Endothelial cell of umbilical vein (primary cell): ENCODE measurements at regions of chr6 and their contacts with region 1.

Region 1: DNA sequence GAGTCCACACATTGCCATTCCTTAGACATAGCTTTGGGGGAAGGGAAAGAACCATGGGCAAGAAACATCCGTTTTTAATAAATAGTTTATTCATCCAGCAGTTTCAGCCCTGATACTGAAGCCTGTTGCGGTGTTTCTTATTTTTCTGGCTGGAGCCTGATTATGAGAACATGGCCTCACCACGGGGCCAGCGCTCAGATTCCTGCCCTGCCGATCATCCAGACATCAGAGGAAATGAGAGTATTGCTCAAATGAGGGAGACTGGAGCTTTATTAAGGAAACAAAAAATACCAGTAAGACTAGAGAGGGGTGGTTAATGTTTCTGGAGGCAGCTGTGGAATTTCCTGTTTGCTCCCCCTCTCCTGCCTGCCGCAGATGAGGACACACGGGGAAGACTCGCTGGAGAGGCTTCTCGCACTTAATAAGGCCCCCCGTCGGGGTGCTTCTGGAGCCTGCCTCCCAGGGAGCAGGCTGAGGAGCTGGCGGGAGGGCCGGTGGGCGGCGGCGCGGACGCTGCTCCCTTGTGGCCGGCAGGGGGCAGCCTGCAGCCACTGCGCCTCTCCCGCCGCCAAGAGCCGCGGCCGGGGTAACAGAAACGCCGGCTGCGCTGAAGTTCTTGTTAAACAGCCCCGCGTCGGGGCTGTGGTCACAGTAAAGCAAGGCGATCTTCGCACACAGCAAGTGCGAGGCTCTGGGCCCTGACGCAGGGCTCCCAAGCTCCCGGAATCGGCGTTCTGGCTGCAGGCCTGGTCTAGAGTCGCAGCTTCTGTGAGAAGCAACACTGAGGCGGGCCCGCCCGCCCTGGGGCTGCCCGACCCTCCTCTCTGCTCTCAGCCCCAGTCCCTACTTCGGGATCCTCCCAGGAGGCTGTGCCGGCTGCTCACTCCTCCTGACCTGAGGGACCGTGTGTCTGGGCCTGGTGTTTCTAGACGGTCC is 17.5 kb downstream of the LEMD2 start:
- DNase-seq: peak; percentile 89
- H3K4me3 ChIP-seq: no peak overlapping the region
- H3K27ac ChIP-seq: peak overlapping the region; percentile 64
- H3K4me1 ChIP-seq: peaks cover 45% of the 10 kb centered on the region
- H3K27me3 ChIP-seq: no peaks in the 10 kb centered on the region
- CTCF ChIP-seq: peak; percentile 89 to 94
- POLR2A ChIP-seq: peak; percentile 26

Region 2: GRCh38 chr6:33425668-33426577 is 345.5 kb before region 1 on chr6:
- CTCF ChIA-PET with region 1: no interaction called
- POLR2A ChIA-PET with region 1: no interaction called
- dilution Hi-C with region 1: no loop called
- intact Hi-C with region 1: no loop called
- DNase-seq: peak; percentile 85
- H3K4me3 ChIP-seq: peak overlapping the region; percentile 54 to 70 (median 69)
- H3K27ac ChIP-seq: peak overlapping the region; percentile 56
- H3K4me1 ChIP-seq: peaks cover 26% of the 10 kb centered on the region
- H3K27me3 ChIP-seq: peaks cover 16% of the 10 kb centered on the region in 2 experiments
- CTCF ChIP-seq: peak; percentile 29 to 75
- POLR2A ChIP-seq: peak; percentile 94

Region 3: GRCh38 chr6:33585403-33586107 is 185.9 kb before region 1 on chr6:
- CTCF ChIA-PET with region 1: interaction called, 5 read pairs
- POLR2A ChIA-PET with region 1: no interaction called
- dilution Hi-C with region 1: no loop called
- intact Hi-C with region 1: loop called (anchors 2 kb)
- DNase-seq: peak; percentile 75
- H3K4me3 ChIP-seq: no peak overlapping the region
- H3K27ac ChIP-seq: no peak overlapping the region
- H3K4me1 ChIP-seq: peaks cover 18% of the 10 kb centered on the region
- H3K27me3 ChIP-seq: no peaks in the 10 kb centered on the region
- CTCF ChIP-seq: peak; percentile 89 to 96
- POLR2A ChIP-seq: no peak

Region 4: DNA sequence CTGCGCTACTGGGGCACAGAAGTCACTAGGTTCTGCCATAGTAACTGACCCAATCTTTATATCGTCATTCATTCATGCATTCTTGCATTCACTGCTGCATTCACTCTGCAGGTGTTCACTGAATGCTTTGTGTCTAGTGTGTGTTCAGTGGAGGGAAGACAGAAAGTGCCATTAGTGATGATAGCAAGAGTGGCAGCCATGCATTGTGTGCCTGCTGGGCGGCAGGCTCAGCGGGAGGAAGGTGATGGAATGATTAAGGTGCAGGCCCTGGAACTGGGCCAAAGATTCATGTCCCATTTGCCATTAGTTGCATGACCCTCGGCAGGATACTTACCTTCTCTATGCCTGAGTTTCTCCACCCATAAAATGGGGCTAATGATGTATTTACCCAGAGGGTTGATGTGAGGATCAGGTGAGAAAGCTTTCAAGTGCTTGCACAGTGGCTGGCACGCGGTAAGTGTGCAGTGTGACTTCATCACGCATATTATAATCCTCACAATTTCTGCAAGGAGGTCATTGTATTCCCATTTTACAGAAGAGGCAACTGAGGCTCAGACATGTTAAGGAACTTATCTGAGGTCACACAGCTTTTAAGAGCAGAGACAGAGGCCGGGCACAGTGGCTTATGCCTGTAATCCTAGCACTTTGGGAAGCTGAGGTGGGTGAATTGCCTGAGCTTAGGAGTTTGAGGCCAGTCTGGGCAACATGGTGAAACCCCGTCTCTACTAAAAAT is 110.1 kb before region 1 on chr6:
- CTCF ChIA-PET with region 1: no interaction called
- POLR2A ChIA-PET with region 1: no interaction called
- dilution Hi-C with region 1: no loop called
- intact Hi-C with region 1: no loop called
- DNase-seq: no peak
- H3K4me3 ChIP-seq: no peak overlapping the region
- H3K27ac ChIP-seq: no peak overlapping the region
- H3K4me1 ChIP-seq: no peaks in the 10 kb centered on the region
- H3K27me3 ChIP-seq: no peaks in the 10 kb centered on the region
- CTCF ChIP-seq: no peak
- POLR2A ChIP-seq: no peak

Region 5: GRCh38 chr6:33744001-33744848 is 27.2 kb before region 1 on chr6:
- CTCF ChIA-PET with region 1: interaction called, 15 read pairs
- POLR2A ChIA-PET with region 1: no interaction called
- dilution Hi-C with region 1: no loop called
- intact Hi-C with region 1: loop called (anchors 2 kb)
- DNase-seq: peak; percentile 72
- H3K4me3 ChIP-seq: no peak overlapping the region
- H3K27ac ChIP-seq: no peak overlapping the region
- H3K4me1 ChIP-seq: no peaks in the 10 kb centered on the region
- H3K27me3 ChIP-seq: peaks cover 4 to 9% of the 10 kb centered on the region in 2 experiments
- CTCF ChIP-seq: peak; percentile 90 to 93
- POLR2A ChIP-seq: no peak

Region 6: GRCh38 chr6:33794891-33795623 is 23.6 kb after region 1 on chr6:
- CTCF ChIA-PET with region 1: interaction called, 23 read pairs
- POLR2A ChIA-PET with region 1: no interaction called
- dilution Hi-C with region 1: no loop called
- intact Hi-C with region 1: no loop called
- DNase-seq: no peak
- H3K4me3 ChIP-seq: no peak overlapping the region
- H3K27ac ChIP-seq: no peak overlapping the region
- H3K4me1 ChIP-seq: no peaks in the 10 kb centered on the region
- H3K27me3 ChIP-seq: peaks cover 4 to 14% of the 10 kb centered on the region in 2 experiments
- CTCF ChIP-seq: no peak
- POLR2A ChIP-seq: no peak

Region 7: GRCh38 chr6:33840048-33840926 is 68.9 kb after region 1 on chr6:
- CTCF ChIA-PET with region 1: interaction called, 15 read pairs
- POLR2A ChIA-PET with region 1: no interaction called
- dilution Hi-C with region 1: no loop called
- intact Hi-C with region 1: loop called (anchors 2 kb)
- DNase-seq: peak; percentile 88
- H3K4me3 ChIP-seq: no peak overlapping the region
- H3K27ac ChIP-seq: peak overlapping the region; percentile 69
- H3K4me1 ChIP-seq: peaks cover 18% of the 10 kb centered on the region
- H3K27me3 ChIP-seq: no peaks in the 10 kb centered on the region
- CTCF ChIP-seq: no peak
- POLR2A ChIP-seq: no peak

Region 8: DNA sequence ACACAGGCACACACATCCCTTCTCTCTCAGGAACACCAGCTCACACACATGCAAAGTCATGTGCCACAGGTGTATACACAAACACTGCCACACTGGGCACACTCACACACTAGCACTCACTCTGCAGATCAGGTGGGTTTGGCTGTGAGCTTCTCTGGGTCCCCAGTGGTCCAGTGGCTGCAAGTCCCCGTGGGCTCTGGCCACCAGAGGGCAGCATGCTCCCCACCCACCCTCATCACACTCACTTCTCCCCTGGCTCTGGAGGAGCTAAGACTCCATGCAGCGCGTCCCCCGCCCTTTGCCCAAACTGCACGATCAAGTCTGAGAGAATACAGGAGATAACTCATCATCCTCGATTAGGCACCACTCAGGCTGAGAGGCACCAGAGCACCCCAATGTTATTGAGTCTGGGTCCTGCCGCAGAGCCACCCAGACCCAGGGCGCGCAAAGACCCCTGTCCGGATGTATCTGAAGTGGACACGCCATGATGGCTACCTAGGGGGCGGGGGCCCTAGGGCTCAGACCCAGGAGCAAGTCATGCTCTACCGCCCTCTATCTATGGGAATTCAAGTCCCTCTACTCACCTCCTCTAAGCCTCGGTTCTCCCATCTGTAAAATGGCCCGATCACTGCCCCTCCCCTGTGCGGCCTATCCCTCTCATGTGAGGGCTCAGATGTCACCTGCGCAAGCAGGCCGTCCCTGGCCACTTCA is 284.0 kb after region 1 on chr6:
- CTCF ChIA-PET with region 1: interaction called, 33 read pairs
- POLR2A ChIA-PET with region 1: no interaction called
- dilution Hi-C with region 1: no loop called
- intact Hi-C with region 1: loop called (anchors 1 kb)
- DNase-seq: peak; percentile 61
- H3K4me3 ChIP-seq: no peak overlapping the region
- H3K27ac ChIP-seq: no peak overlapping the region
- H3K4me1 ChIP-seq: no peaks in the 10 kb centered on the region
- H3K27me3 ChIP-seq: peaks cover 0 to 1% of the 10 kb centered on the region in 2 experiments
- CTCF ChIP-seq: peak; percentile 71 to 97
- POLR2A ChIP-seq: no peak